ENCODE measurements at regions of chr2 and their contacts with region 1.

Region 1: GRCh38 chr2:25671622-25672021 is 1.8 kb downstream of the DTNB start:
- DNase-seq: no peak
- H3K4me3 ChIP-seq: no peak overlapping the region
- H3K4me3 Mint-ChIP-seq: peak overlapping the region; percentile 45 to 93 (median 85)
- H3K27ac ChIP-seq: no peak overlapping the region
- H3K27ac Mint-ChIP-seq: peak overlapping the region in 4 of 8 donors; percentile 27 to 81 (median 42)
- H3K4me1 ChIP-seq: peaks cover 18% of the 10 kb centered on the region
- H3K4me1 Mint-ChIP-seq: peaks cover 21 to 37% (median 33%) of the 10 kb centered on the region in 3 donors
- H3K27me3 ChIP-seq: no peaks in the 10 kb centered on the region
- H3K27me3 Mint-ChIP-seq: peaks cover 0 to 1% of the 10 kb centered on the region in 2 donors

Region 2: GRCh38 chr2:24971536-24972314 is 699.9 kb before region 1 on chr2 and contains the start of gene DNAJC27:
- CTCF ChIA-PET with region 1: no interaction called
- POLR2A ChIA-PET with region 1: interaction called, 11 read pairs
- DNase-seq: peak; percentile 96 to 99 (median 98)
- H3K4me3 ChIP-seq: peak within 1 kb of the TSS; percentile 64
- H3K4me3 Mint-ChIP-seq: peak within 1 kb of the TSS; percentile 94 to 98 (median 98)
- H3K27ac ChIP-seq: peak within 1 kb of the TSS; percentile 99
- H3K27ac Mint-ChIP-seq: peak within 1 kb of the TSS; percentile 99 to 100 (median 100)
- H3K4me1 ChIP-seq: peaks cover 13% of the 10 kb centered on the region
- H3K4me1 Mint-ChIP-seq: peaks cover 22 to 36% (median 27%) of the 10 kb centered on the region in 3 donors
- H3K27me3 ChIP-seq: no peaks in the 10 kb centered on the region
- H3K27me3 Mint-ChIP-seq: peaks cover 0 to 2% of the 10 kb centered on the region in 2 donors
- total RNA-seq, gene DNAJC27: 4.4 to 4.7 TPM

Region 3: DNA sequence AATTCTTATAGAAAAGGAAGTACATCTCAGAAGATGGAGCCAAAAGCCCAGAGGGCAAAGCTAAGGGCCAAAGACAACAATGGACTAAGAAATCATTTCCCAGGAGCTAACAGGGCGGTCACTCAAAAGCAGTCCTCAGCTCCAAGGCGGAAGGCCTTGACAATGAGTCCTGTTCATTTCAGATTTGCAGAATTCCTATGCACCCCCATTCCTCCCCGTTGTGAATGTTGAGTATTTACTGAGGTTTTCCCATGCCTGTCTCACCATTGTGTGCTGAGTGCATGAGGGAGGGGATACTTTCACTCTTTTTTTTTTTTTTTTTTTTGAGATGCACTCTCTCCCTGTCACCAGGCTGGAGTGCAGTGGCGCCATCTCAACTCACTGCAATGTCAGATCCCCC is 20.5 kb after region 1 on chr2:
- CTCF ChIA-PET with region 1: no interaction called
- POLR2A ChIA-PET with region 1: no interaction called
- DNase-seq: no peak
- H3K4me3 ChIP-seq: no peak overlapping the region
- H3K4me3 Mint-ChIP-seq: no peak overlapping the region
- H3K27ac ChIP-seq: no peak overlapping the region
- H3K27ac Mint-ChIP-seq: no peak overlapping the region
- H3K4me1 ChIP-seq: no peaks in the 10 kb centered on the region
- H3K4me1 Mint-ChIP-seq: no peaks in the 10 kb centered on the region
- H3K27me3 ChIP-seq: no peaks in the 10 kb centered on the region
- H3K27me3 Mint-ChIP-seq: peaks cover 0 to 3% of the 10 kb centered on the region in 2 donors

Measured in CD8-positive, alpha-beta memory T cell (primary cell).